CD4-positive, alpha-beta T cell (primary cell): ENCODE measurements at regions of chr9 and their contacts with region 1.

Region 1: DNA sequence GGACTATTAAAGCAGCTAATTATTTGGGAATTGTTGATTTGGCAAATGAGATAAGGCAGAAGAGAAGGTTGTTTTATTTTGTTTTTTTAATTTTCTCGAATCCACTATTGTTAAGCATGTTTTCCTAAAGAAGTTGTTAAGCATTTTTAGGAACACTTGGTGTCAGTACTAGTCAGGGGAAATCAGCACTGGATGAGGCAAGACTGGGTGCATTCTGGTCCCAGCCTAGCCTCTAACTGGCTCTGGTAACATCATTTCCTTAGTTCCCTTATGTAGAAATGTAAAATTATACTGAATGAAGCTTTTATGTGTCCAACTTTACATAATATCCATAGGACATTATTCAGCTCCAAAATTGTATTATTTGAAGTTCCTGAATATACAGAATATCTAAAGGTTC is 196.1 kb downstream of the PCSK5 start:
- DNase-seq: no peak
- ATAC-seq: no peak
- H3K4me3 ChIP-seq: no peak overlapping the region
- H3K4me3 Mint-ChIP-seq: no peak overlapping the region
- H3K27ac ChIP-seq: no peak overlapping the region
- H3K27ac Mint-ChIP-seq: no peak overlapping the region
- H3K4me1 ChIP-seq: no peaks in the 10 kb centered on the region
- H3K4me1 Mint-ChIP-seq: no peaks in the 10 kb centered on the region
- H3K27me3 ChIP-seq: no peaks in the 10 kb centered on the region
- H3K27me3 Mint-ChIP-seq: no peaks in the 10 kb centered on the region
- CTCF ChIP-seq: no peak

Region 2: DNA sequence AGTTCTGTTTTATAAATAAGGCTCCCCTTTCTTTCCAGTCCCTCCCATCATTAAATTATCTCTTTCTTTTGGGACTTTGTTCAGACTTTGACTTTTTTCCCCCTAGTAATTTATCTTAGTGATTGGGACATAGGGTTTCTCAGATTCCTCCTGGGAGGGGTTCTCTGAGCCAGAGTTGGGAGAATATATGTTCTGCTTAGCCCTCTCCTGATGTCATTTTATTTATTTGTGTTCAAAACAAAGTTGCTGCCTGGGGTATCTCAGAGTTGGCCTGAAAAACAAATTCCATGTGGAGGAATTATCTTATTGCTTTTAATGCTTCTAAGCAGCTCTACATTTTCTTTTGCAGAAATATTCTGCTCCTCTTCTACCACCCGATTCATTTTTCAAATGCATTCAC is 15.0 kb after region 1 on chr9:
- CTCF ChIA-PET with region 1: no interaction called
- POLR2A ChIA-PET with region 1: no interaction called
- intact Hi-C with region 1: loop called in 1 of 2 experiments (anchors 1 kb)
- DNase-seq: no peak
- ATAC-seq: no peak
- H3K4me3 ChIP-seq: no peak overlapping the region
- H3K4me3 Mint-ChIP-seq: no peak overlapping the region
- H3K27ac ChIP-seq: no peak overlapping the region
- H3K27ac Mint-ChIP-seq: no peak overlapping the region
- H3K4me1 ChIP-seq: no peaks in the 10 kb centered on the region
- H3K4me1 Mint-ChIP-seq: peaks cover 34% of the 10 kb centered on the region
- H3K27me3 ChIP-seq: no peaks in the 10 kb centered on the region
- H3K27me3 Mint-ChIP-seq: no peaks in the 10 kb centered on the region
- CTCF ChIP-seq: no peak

Region 3: DNA sequence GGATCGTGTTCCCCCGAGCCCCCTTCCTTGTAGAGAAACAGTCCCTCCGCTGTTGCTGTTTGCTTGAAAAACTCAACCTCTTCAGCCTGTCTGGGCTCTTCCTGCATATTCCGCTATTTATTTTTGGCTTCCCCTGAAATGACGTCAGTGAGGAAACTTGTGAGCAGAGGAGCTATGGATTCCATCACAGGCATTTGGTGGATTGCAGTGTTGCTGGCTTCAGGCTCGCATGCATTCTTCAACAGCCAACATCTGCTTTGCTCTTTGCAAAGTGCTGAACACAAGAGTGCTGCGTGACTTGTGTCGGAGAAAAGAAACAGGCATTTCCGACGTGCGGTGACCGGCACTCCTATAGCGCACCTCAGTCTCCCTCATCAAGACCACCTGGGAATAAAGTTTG is 75.0 kb after region 1 on chr9:
- CTCF ChIA-PET with region 1: no interaction called
- POLR2A ChIA-PET with region 1: no interaction called
- intact Hi-C with region 1: loop called in 1 of 2 experiments (anchors 10 kb)
- DNase-seq: no peak
- ATAC-seq: no peak
- H3K4me3 ChIP-seq: no peak overlapping the region
- H3K4me3 Mint-ChIP-seq: no peak overlapping the region
- H3K27ac ChIP-seq: no peak overlapping the region
- H3K27ac Mint-ChIP-seq: no peak overlapping the region
- H3K4me1 ChIP-seq: no peaks in the 10 kb centered on the region
- H3K4me1 Mint-ChIP-seq: peaks cover 7% of the 10 kb centered on the region
- H3K27me3 ChIP-seq: no peaks in the 10 kb centered on the region
- H3K27me3 Mint-ChIP-seq: no peaks in the 10 kb centered on the region
- CTCF ChIP-seq: no peak